PC-3 (cell line): ENCODE measurements at regions of chr10 and their contacts with region 1.

Region 1: DNA sequence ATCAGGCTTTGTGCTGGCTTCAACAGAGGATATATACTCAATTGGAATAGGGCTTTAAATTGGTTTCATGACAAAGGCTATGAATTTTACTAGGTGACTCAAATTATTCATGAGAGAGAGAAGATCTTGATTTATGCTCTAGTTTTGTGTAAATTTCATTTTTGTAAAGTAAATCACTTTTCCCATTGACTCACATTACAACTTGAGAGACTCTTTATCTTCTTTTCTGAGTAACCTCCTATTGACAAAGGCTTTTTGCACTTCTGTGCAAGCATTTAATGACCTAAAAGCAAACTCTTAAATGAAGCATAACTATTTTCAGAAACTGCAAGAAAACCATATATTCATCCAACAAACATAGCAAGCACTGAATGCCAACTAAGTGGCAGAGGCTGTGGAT is 98.5 kb upstream of the RHOBTB1 start:
- DNase-seq: peak; percentile 48
- ATAC-seq: peak; percentile 81
- H3K4me3 ChIP-seq: no peak overlapping the region
- H3K27ac ChIP-seq: no peak overlapping the region
- H3K4me1 ChIP-seq: no peaks in the 10 kb centered on the region; the same call in 1 of the 2 replicates
- H3K27me3 ChIP-seq: peaks cover 16% of the 10 kb centered on the region; the same call in 1 of the 2 replicates
- CTCF ChIP-seq: no peak

Region 2: GRCh38 chr10:61028861-61029361 is 13.6 kb before region 1 on chr10:
- CTCF ChIA-PET with region 1: no interaction called
- POLR2A ChIA-PET with region 1: no interaction called
- intact Hi-C with region 1: loop called (anchors 1 kb)
- DNase-seq: peak; percentile 73
- ATAC-seq: peak; percentile 88
- H3K4me3 ChIP-seq: no peak overlapping the region
- H3K27ac ChIP-seq: no peak overlapping the region
- H3K4me1 ChIP-seq: peaks cover 13% of the 10 kb centered on the region
- H3K27me3 ChIP-seq: no peaks in the 10 kb centered on the region
- CTCF ChIP-seq: no peak

Region 3: GRCh38 chr10:61110188-61110920 is 67.8 kb after region 1 on chr10:
- CTCF ChIA-PET with region 1: no interaction called
- POLR2A ChIA-PET with region 1: interaction called, 6 read pairs
- intact Hi-C with region 1: loop called (anchors 1 kb)
- DNase-seq: peak; percentile 92
- ATAC-seq: peak; percentile 79
- H3K4me3 ChIP-seq: 0 out of 2 replicates have a peak overlapping the region, but pooled peaks have one; percentile 3
- H3K27ac ChIP-seq: peak overlapping the region; percentile 63
- H3K4me1 ChIP-seq: peaks cover 24% of the 10 kb centered on the region
- H3K27me3 ChIP-seq: no peaks in the 10 kb centered on the region
- CTCF ChIP-seq: no peak

Region 4: GRCh38 chr10:61115897-61116296 is 73.4 kb after region 1 on chr10:
- CTCF ChIA-PET with region 1: no interaction called
- POLR2A ChIA-PET with region 1: interaction called, 6 read pairs
- intact Hi-C with region 1: loop called (anchors 1 kb)
- DNase-seq: no peak
- ATAC-seq: peak; percentile 55
- H3K4me3 ChIP-seq: no peak overlapping the region
- H3K27ac ChIP-seq: peak overlapping the region; percentile 7; the same call in 1 of the 2 replicates
- H3K4me1 ChIP-seq: peaks cover 8% of the 10 kb centered on the region
- H3K27me3 ChIP-seq: no peaks in the 10 kb centered on the region
- CTCF ChIP-seq: no peak